Ovary (tissue), 10 donors: ENCODE measurements at regions of chr4 and their contacts with region 1.

Region 1: GRCh38 chr4:77308843-77309242 is 151.8 kb downstream of the CCNG2 start:
- DNase-seq: no peak
- H3K4me3 ChIP-seq: no peak overlapping the region
- H3K27ac ChIP-seq: no peak overlapping the region
- H3K4me1 ChIP-seq: no peaks in the 10 kb centered on the region
- H3K27me3 ChIP-seq: no peaks in the 10 kb centered on the region
- CTCF ChIP-seq: no peak
- EP300 ChIP-seq: no peak
- POLR2A ChIP-seq: no peak

Region 2: GRCh38 chr4:76874178-76874577 is 434.7 kb before region 1 on chr4:
- intact Hi-C with region 1: loop called in 1 of 4 experiments (anchors 5 kb)
- DNase-seq: no peak
- H3K4me3 ChIP-seq: no peak overlapping the region
- H3K27ac ChIP-seq: no peak overlapping the region
- H3K4me1 ChIP-seq: no peaks in the 10 kb centered on the region
- H3K27me3 ChIP-seq: no peaks in the 10 kb centered on the region
- CTCF ChIP-seq: no peak
- EP300 ChIP-seq: no peak
- POLR2A ChIP-seq: no peak

Region 3: DNA sequence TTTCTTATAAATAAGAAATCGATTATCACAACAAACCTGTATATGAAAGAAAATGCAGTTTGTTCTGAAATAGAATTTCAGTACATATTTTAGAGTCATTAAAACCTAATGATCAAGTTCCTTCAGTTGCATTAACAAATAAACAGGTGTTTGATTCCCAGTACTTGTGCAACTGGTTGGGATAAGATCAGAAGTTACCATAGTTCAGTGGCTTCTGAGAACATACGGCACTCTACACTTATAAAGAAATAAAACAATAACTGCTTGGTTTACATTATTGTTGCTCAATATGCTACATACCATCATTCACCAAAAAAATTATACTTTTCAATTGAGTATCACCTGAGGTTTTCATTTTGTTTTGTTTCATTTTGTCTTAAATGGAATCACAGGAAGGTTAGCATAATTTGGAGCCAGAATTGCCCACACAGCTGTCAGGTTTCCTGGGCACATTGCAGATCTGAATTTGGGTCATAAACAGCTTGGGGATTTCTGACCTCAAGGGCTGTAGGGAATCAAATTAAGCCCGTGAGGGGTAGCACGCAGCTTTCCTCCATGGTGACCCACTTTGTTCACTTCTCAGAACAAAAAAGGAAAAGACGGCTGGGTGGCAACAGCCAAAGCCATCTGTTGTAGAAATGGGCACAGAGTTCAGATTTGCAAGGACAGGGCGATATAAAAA is 166.7 kb before region 1 on chr4:
- intact Hi-C with region 1: no loop called
- DNase-seq: no peak
- H3K4me3 ChIP-seq: no peak overlapping the region
- H3K27ac ChIP-seq: no peak overlapping the region
- H3K4me1 ChIP-seq: no peaks in the 10 kb centered on the region
- H3K27me3 ChIP-seq: no peaks in the 10 kb centered on the region
- CTCF ChIP-seq: no peak
- EP300 ChIP-seq: no peak
- POLR2A ChIP-seq: no peak